Activated B cell treated with CpG ODN at 0.5 μM for 24 hours (primary cell): ENCODE measurements at regions of chr7 and their contacts with region 1.

Region 1: GRCh38 chr7:94223375-94224070 is 171.2 kb upstream of the COL1A2 start:
- DNase-seq: no peak
- ATAC-seq: no peak
- H3K4me3 Mint-ChIP-seq: no peak overlapping the region
- H3K27ac Mint-ChIP-seq: no peak overlapping the region
- H3K4me1 Mint-ChIP-seq: no peaks in the 10 kb centered on the region
- H3K27me3 Mint-ChIP-seq: peaks cover 3% of the 10 kb centered on the region
- CTCF ChIP-seq: no peak

Region 2: GRCh38 chr7:93245525-93246432 is 977.7 kb before region 1 on chr7:
- CTCF ChIA-PET with region 1: interaction called, 3 read pairs
- POLR2A ChIA-PET with region 1: no interaction called
- intact Hi-C with region 1: loop called (anchors 1 kb)
- DNase-seq: no peak
- ATAC-seq: peak; percentile 25
- H3K4me3 Mint-ChIP-seq: no peak overlapping the region
- H3K27ac Mint-ChIP-seq: no peak overlapping the region
- H3K4me1 Mint-ChIP-seq: peaks cover 2% of the 10 kb centered on the region
- H3K27me3 Mint-ChIP-seq: no peaks in the 10 kb centered on the region
- CTCF ChIP-seq: peak; percentile 42

Region 3: DNA sequence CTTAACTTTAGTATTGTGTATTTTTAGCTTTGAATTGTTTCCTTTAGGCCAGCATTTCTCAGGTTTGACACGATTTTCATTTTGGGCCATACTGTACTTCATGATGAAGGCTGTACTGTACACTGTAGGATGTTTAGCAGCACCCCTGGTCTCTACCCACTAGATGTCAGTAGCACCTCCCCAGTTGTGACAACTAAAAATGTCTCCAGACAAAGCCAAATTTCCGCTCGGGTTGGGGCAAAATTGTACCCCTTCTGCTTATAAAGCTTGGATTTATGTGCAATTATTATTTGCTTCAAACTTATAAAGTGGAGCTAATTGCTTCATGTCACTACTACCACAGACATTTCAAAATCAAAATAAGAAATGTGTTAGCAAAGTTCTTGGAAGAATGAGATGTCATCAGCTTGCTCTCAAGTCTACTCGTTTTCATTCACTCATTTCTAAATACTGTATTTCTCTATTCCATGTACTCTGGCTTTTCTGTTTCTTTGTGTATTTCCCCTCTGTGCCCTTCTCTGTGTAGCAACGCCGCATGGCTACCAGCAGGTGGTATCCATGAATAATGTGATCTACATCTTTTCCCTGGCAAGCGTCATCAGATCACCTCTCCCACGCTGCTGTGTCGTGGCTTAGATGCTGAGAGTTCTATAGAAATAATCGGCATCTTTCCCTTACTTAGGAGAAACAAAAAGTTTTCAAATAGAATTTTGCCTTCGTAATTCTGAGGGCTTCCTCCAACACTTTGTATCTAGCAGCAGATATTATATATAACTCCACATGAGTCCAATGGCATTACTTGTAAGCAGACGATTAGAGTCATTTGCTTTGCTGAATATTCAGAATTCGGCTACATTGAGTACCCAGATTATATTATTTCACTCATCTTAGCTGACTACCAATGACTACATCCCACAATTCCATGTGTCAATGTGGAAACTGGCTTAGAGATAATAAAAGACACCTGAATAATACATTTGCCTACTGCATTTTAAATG is 601.2 kb before region 1 on chr7:
- CTCF ChIA-PET with region 1: no interaction called
- POLR2A ChIA-PET with region 1: no interaction called
- intact Hi-C with region 1: loop called (anchors 10 kb)
- DNase-seq: no peak
- ATAC-seq: no peak
- H3K4me3 Mint-ChIP-seq: no peak overlapping the region
- H3K27ac Mint-ChIP-seq: no peak overlapping the region
- H3K4me1 Mint-ChIP-seq: no peaks in the 10 kb centered on the region
- H3K27me3 Mint-ChIP-seq: peaks cover 1% of the 10 kb centered on the region
- CTCF ChIP-seq: no peak

Region 4: GRCh38 chr7:93715234-93715633 is 508.3 kb before region 1 on chr7:
- CTCF ChIA-PET with region 1: interaction called, 5 read pairs
- POLR2A ChIA-PET with region 1: no interaction called
- intact Hi-C with region 1: loop called (anchors 1 kb)
- DNase-seq: peak; percentile 14
- ATAC-seq: no peak
- H3K4me3 Mint-ChIP-seq: no peak overlapping the region
- H3K27ac Mint-ChIP-seq: no peak overlapping the region
- H3K4me1 Mint-ChIP-seq: no peaks in the 10 kb centered on the region
- H3K27me3 Mint-ChIP-seq: peaks cover 10% of the 10 kb centered on the region
- CTCF ChIP-seq: no peak

Region 5: GRCh38 chr7:93799750-93800357 is 423.7 kb before region 1 on chr7:
- CTCF ChIA-PET with region 1: no interaction called
- POLR2A ChIA-PET with region 1: no interaction called
- intact Hi-C with region 1: loop called (anchors 1 kb)
- DNase-seq: no peak
- ATAC-seq: no peak
- H3K4me3 Mint-ChIP-seq: no peak overlapping the region
- H3K27ac Mint-ChIP-seq: no peak overlapping the region
- H3K4me1 Mint-ChIP-seq: no peaks in the 10 kb centered on the region
- H3K27me3 Mint-ChIP-seq: peaks cover 2% of the 10 kb centered on the region
- CTCF ChIP-seq: no peak

Region 6: GRCh38 chr7:93902777-93903423 is 320.6 kb before region 1 on chr7:
- CTCF ChIA-PET with region 1: interaction called, 11 read pairs
- POLR2A ChIA-PET with region 1: no interaction called
- intact Hi-C with region 1: loop called (anchors 1 kb)
- DNase-seq: no peak
- ATAC-seq: no peak
- H3K4me3 Mint-ChIP-seq: no peak overlapping the region
- H3K27ac Mint-ChIP-seq: no peak overlapping the region
- H3K4me1 Mint-ChIP-seq: no peaks in the 10 kb centered on the region
- H3K27me3 Mint-ChIP-seq: peaks cover 17% of the 10 kb centered on the region
- CTCF ChIP-seq: peak; percentile 74